CD4-positive, alpha-beta T cell (primary cell): ENCODE measurements at regions of chr9 and their contacts with region 1.

Region 1: GRCh38 chr9:110048403-110048975 is 159.5 kb downstream of the C9orf152 start:
- DNase-seq: peak; percentile 58 to 90 (median 76)
- ATAC-seq: peak; percentile 95
- H3K4me3 ChIP-seq: peak overlapping the region; percentile 76
- H3K4me3 Mint-ChIP-seq: peak overlapping the region; percentile 90
- H3K27ac ChIP-seq: no peak overlapping the region
- H3K27ac Mint-ChIP-seq: peak overlapping the region; percentile 57
- H3K4me1 ChIP-seq: peaks cover 29% of the 10 kb centered on the region
- H3K4me1 Mint-ChIP-seq: peaks cover 36% of the 10 kb centered on the region
- H3K27me3 ChIP-seq: no peaks in the 10 kb centered on the region
- H3K27me3 Mint-ChIP-seq: peaks cover 27% of the 10 kb centered on the region
- CTCF ChIP-seq: no peak

Region 2: GRCh38 chr9:109969011-109969410 is 79.5 kb before region 1 on chr9:
- CTCF ChIA-PET with region 1: no interaction called
- POLR2A ChIA-PET with region 1: interaction called, 11 read pairs
- intact Hi-C with region 1: no loop called
- DNase-seq: no peak
- ATAC-seq: no peak
- H3K4me3 ChIP-seq: no peak overlapping the region
- H3K4me3 Mint-ChIP-seq: peak overlapping the region; percentile 21
- H3K27ac ChIP-seq: peak overlapping the region; percentile 58 to 60
- H3K27ac Mint-ChIP-seq: peak overlapping the region; percentile 82
- H3K4me1 ChIP-seq: peaks cover 59% of the 10 kb centered on the region
- H3K4me1 Mint-ChIP-seq: peaks cover 72% of the 10 kb centered on the region
- H3K27me3 ChIP-seq: no peaks in the 10 kb centered on the region
- H3K27me3 Mint-ChIP-seq: no peaks in the 10 kb centered on the region
- CTCF ChIP-seq: no peak

Region 3: DNA sequence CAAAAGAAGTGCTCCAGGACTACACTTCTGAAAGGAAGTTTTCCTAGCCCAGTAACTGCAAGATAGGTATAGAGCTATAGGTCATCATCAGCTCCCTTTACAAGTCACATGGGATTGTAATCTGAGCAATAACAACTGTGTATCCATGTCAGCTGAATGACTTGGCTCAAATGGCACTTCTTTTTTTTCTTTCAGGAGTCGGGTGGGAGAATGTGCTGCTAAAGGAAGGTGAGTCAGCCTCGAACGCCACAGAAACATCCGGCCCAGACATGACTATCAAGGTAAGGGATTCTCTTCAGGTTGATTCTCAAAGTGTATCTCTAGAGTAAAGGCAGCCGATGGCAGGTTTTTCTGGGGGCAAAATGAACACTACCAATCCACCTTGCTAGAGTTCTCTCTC is 32.7 kb before region 1 on chr9:
- CTCF ChIA-PET with region 1: no interaction called
- POLR2A ChIA-PET with region 1: no interaction called
- intact Hi-C with region 1: loop called in 1 of 2 experiments (anchors 1 kb)
- DNase-seq: peak in 7 of 14 experiments; percentile 3 to 35 (median 9)
- ATAC-seq: peak; percentile 44
- H3K4me3 ChIP-seq: no peak overlapping the region
- H3K4me3 Mint-ChIP-seq: no peak overlapping the region
- H3K27ac ChIP-seq: no peak overlapping the region
- H3K27ac Mint-ChIP-seq: no peak overlapping the region
- H3K4me1 ChIP-seq: peaks cover 7% of the 10 kb centered on the region
- H3K4me1 Mint-ChIP-seq: no peaks in the 10 kb centered on the region
- H3K27me3 ChIP-seq: no peaks in the 10 kb centered on the region
- H3K27me3 Mint-ChIP-seq: no peaks in the 10 kb centered on the region
- CTCF ChIP-seq: no peak

Region 4: GRCh38 chr9:110256380-110257096 is 208.0 kb after region 1 on chr9 and contains the start of gene TXN:
- CTCF ChIA-PET with region 1: no interaction called
- POLR2A ChIA-PET with region 1: no interaction called
- intact Hi-C with region 1: loop called in 1 of 2 experiments (anchors 5 kb)
- DNase-seq: peak; percentile 59 to 91 (median 77)
- ATAC-seq: peak; percentile 78
- H3K4me3 ChIP-seq: peak within 1 kb of the TSS; percentile 85
- H3K4me3 Mint-ChIP-seq: peak within 1 kb of the TSS; percentile 98
- H3K27ac ChIP-seq: peak within 1 kb of the TSS; percentile 37 to 63
- H3K27ac Mint-ChIP-seq: peak within 1 kb of the TSS; percentile 83
- H3K4me1 ChIP-seq: peaks cover 32% of the 10 kb centered on the region
- H3K4me1 Mint-ChIP-seq: peaks cover 44% of the 10 kb centered on the region
- H3K27me3 ChIP-seq: no peaks in the 10 kb centered on the region
- H3K27me3 Mint-ChIP-seq: no peaks in the 10 kb centered on the region
- CTCF ChIP-seq: no peak
- total RNA-seq, gene TXN: 31.5 to 35.1 TPM